ENCODE measurements at regions of chr5 and their contacts with region 1.

Region 1: GRCh38 chr5:68287976-68288706 is 72.6 kb downstream of the PIK3R1 start:
- DNase-seq: peak; percentile 55 to 85
- H3K4me3 ChIP-seq: peak overlapping the region; percentile 53 to 55
- H3K27ac ChIP-seq: peak overlapping the region; percentile 76 to 86
- H3K4me1 ChIP-seq: peaks cover 0 to 91% (median 58%) of the 10 kb centered on the region in 4 donors
- H3K27me3 ChIP-seq: no peaks in the 10 kb centered on the region
- CTCF ChIP-seq: no peak

Region 2: GRCh38 chr5:68114378-68115040 is 173.6 kb before region 1 on chr5:
- intact Hi-C with region 1: no loop called
- DNase-seq: no peak
- H3K4me3 ChIP-seq: no peak overlapping the region
- H3K27ac ChIP-seq: no peak overlapping the region
- H3K4me1 ChIP-seq: no peaks in the 10 kb centered on the region
- H3K27me3 ChIP-seq: no peaks in the 10 kb centered on the region
- CTCF ChIP-seq: no peak

Region 3: GRCh38 chr5:68343421-68343826 is 55.3 kb after region 1 on chr5:
- intact Hi-C with region 1: no loop called
- DNase-seq: peak; percentile 90 to 92
- H3K4me3 ChIP-seq: no peak overlapping the region
- H3K27ac ChIP-seq: peak overlapping the region; percentile 81 to 82
- H3K4me1 ChIP-seq: peaks cover 0 to 25% (median 15%) of the 10 kb centered on the region in 4 donors
- H3K27me3 ChIP-seq: no peaks in the 10 kb centered on the region
- CTCF ChIP-seq: no peak

Region 4: GRCh38 chr5:68460147-68460798 is 172.1 kb after region 1 on chr5:
- intact Hi-C with region 1: loop called (anchors 5 kb)
- DNase-seq: peak in 1 of 2 donors; percentile 34
- H3K4me3 ChIP-seq: no peak overlapping the region
- H3K27ac ChIP-seq: no peak overlapping the region
- H3K4me1 ChIP-seq: peaks cover 3 to 21% (median 8%) of the 10 kb centered on the region in 4 donors
- H3K27me3 ChIP-seq: no peaks in the 10 kb centered on the region
- CTCF ChIP-seq: peak; percentile 58 to 69

Region 5: GRCh38 chr5:68962757-68963484 is 674.8 kb after region 1 on chr5:
- intact Hi-C with region 1: loop called (anchors 5 kb)
- DNase-seq: peak; percentile 71 to 84
- H3K4me3 ChIP-seq: no peak overlapping the region
- H3K27ac ChIP-seq: peak overlapping the region; percentile 7 to 11
- H3K4me1 ChIP-seq: peaks cover 0 to 10% (median 5%) of the 10 kb centered on the region in 4 donors
- H3K27me3 ChIP-seq: no peaks in the 10 kb centered on the region
- CTCF ChIP-seq: peak; percentile 78 to 84